ENCODE measurements at regions of chr3 and their contacts with region 1.

Region 1: DNA sequence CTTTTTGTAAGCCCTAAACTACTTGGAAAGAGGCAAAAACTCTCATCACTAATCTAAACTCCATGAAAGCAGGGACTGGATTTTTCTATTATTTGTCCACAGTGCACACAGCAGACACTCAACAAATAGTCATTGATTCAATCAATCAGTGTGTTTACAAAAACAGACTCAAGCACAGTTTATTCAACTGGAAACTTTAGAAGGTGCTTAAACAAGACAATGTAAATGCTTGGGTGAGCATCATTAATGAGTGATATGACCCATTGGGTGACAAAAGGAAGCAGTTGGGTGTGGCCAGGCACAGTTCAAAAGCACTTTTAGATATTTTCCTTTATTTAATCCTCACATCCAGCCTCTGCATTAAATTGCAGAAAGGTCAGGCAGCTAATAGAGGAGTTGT is 32.0 kb upstream of the PPP4R2 start:
- DNase-seq: no peak
- H3K4me3 Mint-ChIP-seq: no peak overlapping the region
- H3K27ac Mint-ChIP-seq: no peak overlapping the region
- H3K4me1 Mint-ChIP-seq: peaks cover 40% of the 10 kb centered on the region
- H3K27me3 Mint-ChIP-seq: no peaks in the 10 kb centered on the region

Region 2: GRCh38 chr3:72942427-72942826 is 22.2 kb before region 1 on chr3:
- CTCF ChIA-PET with region 1: no interaction called
- POLR2A ChIA-PET with region 1: no interaction called
- DNase-seq: no peak
- H3K4me3 Mint-ChIP-seq: no peak overlapping the region
- H3K27ac Mint-ChIP-seq: no peak overlapping the region
- H3K4me1 Mint-ChIP-seq: peaks cover 7% of the 10 kb centered on the region
- H3K27me3 Mint-ChIP-seq: peaks cover 4% of the 10 kb centered on the region

Region 3: GRCh38 chr3:72996473-72997333 is 32.1 kb after region 1 on chr3 and contains the start of gene PPP4R2:
- CTCF ChIA-PET with region 1: interaction called, 3 read pairs
- POLR2A ChIA-PET with region 1: interaction called, 11 read pairs
- DNase-seq: peak; percentile 93
- H3K4me3 Mint-ChIP-seq: peak within 1 kb of the TSS; percentile 89
- H3K27ac Mint-ChIP-seq: peak within 1 kb of the TSS; percentile 89
- H3K4me1 Mint-ChIP-seq: peaks cover 43% of the 10 kb centered on the region
- H3K27me3 Mint-ChIP-seq: no peaks in the 10 kb centered on the region
- total RNA-seq, gene PPP4R2: 105 to 106 TPM

Region 4: DNA sequence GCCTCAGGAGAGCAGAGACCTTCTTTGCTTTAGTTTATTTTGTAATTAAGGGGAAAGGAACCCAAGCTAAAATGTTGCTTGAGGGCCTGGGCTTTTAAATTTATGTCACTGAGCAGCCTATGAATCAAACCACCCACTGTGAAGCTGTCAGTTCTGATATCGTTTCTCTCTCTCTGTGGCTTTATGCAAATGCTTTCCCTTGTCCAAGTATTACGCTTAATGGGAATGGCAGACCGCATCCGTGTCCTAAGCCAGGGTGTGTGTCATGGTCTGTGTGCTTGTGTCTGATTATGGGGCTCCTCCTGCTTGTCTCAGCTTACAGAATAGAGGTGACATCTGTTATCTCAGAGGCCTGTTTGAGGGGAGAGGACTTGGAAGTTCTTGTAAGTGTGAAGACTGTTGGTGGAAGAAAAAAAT is 179.2 kb after region 1 on chr3:
- CTCF ChIA-PET with region 1: no interaction called
- POLR2A ChIA-PET with region 1: no interaction called
- DNase-seq: no peak
- H3K4me3 Mint-ChIP-seq: no peak overlapping the region
- H3K27ac Mint-ChIP-seq: no peak overlapping the region
- H3K4me1 Mint-ChIP-seq: no peaks in the 10 kb centered on the region
- H3K27me3 Mint-ChIP-seq: peaks cover 2% of the 10 kb centered on the region

Measured in activated CD4-positive, alpha-beta memory T cell treated with anti-CD3 and anti-CD28 coated beads, Interleukin-2, amount 10 ng/mL, durations not matched to agents 7 days and 5 days (primary cell).